ENCODE measurements at regions of chr10 and their contacts with region 1.

Region 1: GRCh38 chr10:44974628-44975431 is 3.8 kb downstream of the DEPP1 start:
- DNase-seq: peak; percentile 89
- CTCF ChIP-seq: peak; percentile 87

Region 2: GRCh38 chr10:44925224-44925623 is 49.6 kb before region 1 on chr10:
- in situ Hi-C with region 1: loop called (anchors 10 kb)
- DNase-seq: no peak
- CTCF ChIP-seq: peak; percentile 15